Activated CD4-positive, alpha-beta memory T cell treated with anti-CD3 and anti-CD28 coated beads, Interleukin-2, amount 10 ng/mL, durations not matched to agents 7 days and 5 days (primary cell): ENCODE measurements at regions of chr12 and their contacts with region 1.

Region 1: DNA sequence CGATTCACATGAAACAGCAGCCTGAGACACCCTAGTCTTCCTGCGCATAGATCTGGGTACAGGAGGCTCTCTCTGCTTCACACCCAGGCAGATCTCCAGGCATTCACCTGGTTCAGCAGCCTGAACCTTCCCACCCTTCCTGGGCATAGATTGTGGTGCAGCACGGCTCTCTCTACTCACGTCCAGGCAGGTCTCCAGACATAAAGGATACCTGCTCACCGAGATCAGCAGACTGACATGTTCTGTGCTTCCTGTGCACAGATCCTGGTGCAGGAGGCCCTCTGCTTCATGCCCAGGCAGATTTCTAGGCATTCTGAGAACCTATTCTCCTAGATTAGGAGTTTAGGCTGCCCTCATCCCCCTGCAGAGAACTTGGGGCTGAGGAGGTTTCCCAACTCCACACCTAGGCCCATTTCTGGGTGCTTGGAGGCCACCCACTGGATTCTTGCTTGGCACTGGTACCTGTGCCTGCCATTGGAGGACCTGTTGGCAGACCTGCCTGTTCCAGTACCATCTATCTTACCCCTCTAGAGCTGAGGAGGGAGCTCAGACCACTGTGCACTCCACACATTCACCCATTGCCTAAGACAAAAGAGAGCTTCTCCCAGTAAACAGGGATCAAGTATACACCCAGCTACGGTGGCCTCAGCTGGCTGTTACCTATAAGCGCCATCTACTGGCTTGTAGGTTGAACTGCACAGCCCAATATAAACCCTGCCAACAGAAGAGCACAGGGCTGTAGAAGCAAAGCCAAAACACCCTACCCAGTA is 28.0 kb upstream of the GARIN6 start:
- DNase-seq: no peak
- H3K4me3 Mint-ChIP-seq: no peak overlapping the region
- H3K27ac Mint-ChIP-seq: no peak overlapping the region
- H3K4me1 Mint-ChIP-seq: no peaks in the 10 kb centered on the region
- H3K27me3 Mint-ChIP-seq: no peaks in the 10 kb centered on the region

Region 2: GRCh38 chr12:99043319-99043914 is 576.2 kb before region 1 on chr12:
- CTCF ChIA-PET with region 1: interaction called, 17 read pairs
- POLR2A ChIA-PET with region 1: no interaction called
- DNase-seq: peak; percentile 57
- H3K4me3 Mint-ChIP-seq: no peak overlapping the region
- H3K27ac Mint-ChIP-seq: no peak overlapping the region
- H3K4me1 Mint-ChIP-seq: no peaks in the 10 kb centered on the region
- H3K27me3 Mint-ChIP-seq: no peaks in the 10 kb centered on the region